Right ventricle myocardium superior (tissue), 1 donor: ENCODE measurements at regions of chr6 and their contacts with region 1.

Region 1: DNA sequence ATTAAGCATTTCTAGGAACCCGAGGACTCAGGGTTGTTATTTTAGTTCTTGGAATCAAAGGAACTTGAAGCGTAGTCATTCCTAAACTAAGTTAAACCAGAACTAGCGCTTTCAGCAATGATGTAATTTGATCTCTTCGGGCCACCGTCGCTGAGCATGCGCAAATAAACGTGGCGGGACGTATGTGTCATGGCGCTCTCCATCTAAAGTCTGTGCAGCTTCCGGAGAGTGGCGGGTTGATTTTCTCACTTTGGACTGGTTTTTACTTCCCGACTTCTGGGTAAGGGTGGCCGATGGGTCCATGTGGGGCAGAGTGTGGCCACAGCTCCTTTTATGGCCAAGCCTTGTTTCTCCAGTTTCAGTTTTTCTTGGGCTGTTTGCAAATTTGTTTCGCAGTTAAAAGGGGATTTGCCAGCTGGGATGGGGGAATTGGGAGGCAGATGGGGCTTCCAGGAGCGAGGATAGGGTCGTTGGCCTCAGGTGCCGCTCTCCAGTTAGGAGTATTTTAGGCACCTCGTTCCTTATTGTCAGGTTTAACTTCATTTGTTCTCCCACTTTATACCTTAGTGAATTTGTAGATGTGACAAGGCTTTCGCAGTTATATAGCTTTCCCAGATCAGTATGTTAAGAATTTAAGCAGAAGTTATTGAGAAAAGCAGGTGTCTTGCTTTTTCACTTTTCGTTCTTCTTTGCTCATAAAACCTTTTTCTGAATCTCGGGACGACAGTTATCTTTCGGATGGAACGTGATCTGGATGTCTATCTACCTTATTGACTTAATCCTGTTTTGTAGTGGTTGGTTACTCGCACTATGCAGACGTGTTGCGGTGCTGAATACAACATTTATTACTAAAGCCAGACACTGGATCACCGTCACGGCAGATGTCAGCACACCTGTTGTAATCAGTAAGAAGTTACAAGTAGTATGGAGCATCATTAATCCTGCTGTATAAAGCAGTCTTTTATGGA is at the start of gene CDKAL1:
- DNase-seq: peak; percentile 93
- ATAC-seq: peak; percentile 98
- total RNA-seq, gene CDKAL1: 10.2 TPM

Region 2: DNA sequence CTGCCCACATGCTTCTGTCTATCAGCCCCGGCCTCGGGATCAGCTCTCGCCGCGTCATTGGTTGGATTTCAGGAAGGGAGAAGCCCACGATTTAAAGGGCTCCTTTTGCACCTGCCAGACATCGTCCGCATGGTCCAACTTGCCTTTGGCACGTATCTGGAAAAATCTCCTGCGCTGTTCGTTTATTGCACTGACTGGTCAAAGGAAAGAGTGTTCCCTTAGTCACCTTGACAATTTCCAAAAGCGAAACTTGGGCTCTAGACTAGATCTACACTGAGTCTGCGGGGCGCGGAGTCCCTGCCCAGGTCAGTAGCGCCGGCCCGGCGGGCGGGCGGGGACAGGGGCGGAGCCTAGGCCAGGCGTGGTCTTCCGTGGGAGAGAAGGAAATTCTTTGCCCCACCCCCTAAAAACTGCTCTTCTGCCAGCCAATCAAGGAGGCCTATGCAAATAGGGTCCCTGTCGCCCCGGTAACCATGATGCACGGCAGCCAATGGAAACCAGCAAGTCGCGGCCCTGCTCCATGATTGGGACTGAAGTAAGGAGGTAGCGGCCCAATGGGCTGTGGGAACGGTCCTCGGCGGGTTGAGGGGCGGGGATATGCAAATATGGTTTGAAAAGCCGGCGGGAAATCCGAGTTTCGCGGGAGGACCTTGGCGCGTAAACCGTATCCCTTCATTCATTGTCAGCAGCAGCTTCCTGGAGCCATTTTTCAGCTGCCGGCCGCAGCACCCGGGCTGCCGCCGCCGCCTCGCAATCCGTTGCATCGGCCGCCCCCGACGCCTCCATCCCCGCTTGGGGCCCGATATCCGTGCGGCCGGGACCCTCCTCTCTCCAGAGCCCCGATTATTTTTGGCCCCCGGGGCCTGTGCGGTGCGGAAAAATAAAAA is 133.1 kb before region 1 on chr6 and contains the start of gene E2F3:
- intact Hi-C with region 1: loop called (anchors 5 kb)
- DNase-seq: peak; percentile 100
- ATAC-seq: peak; percentile 94
- total RNA-seq, gene E2F3: 6.5 TPM